Activated T-helper 1 cell treated with anti-CD3 and anti-CD28 coated beads, Interleukin-12 subunit alpha, Interleukin-12 subunit beta, Interleukin-2, Interleukin-4 antibody, amounts not matched to agents 30 ng/mL and 10 ng/mL and 1 ng/mL, durations not matched to agents 14 hours and 24 hours and 36 hours (primary cell): ENCODE measurements at regions of chr7 and their contacts with region 1.

Region 1: GRCh38 chr7:100545360-100546128 is 6.5 kb downstream of the AGFG2 start:
- DNase-seq: peak; percentile 25
- H3K4me3 Mint-ChIP-seq: peak overlapping the region; percentile 80
- H3K27ac Mint-ChIP-seq: peak overlapping the region; percentile 100
- H3K4me1 Mint-ChIP-seq: peaks cover 98% of the 10 kb centered on the region
- H3K27me3 Mint-ChIP-seq: no peaks in the 10 kb centered on the region

Region 2: DNA sequence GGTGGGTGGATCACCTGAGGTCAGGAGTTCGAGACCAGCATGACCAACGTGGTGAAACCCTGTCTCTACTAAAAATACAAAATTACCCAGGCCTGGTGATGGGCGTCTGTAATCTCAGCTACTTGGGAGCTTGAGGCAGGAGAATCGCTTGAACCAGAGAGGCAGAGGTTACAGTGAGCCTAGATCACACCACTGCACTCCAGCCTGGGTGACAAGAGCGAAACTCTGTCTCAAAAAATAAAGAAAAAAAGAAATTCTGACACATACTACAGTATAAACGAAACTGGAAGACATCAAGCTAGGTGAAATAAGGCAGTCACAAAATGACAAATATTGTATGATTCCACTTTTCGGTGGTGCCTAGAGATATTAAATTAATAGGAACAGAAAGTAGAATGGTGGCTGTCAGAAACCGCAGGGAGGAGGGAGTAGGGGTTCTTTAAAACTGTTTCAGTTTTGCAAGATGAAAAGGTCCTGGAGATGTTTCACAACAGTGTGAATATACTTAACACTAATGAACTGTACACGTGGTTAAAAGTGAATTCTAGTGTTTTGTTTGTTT is 149.0 kb before region 1 on chr7:
- intact Hi-C with region 1: loop called (anchors 1 kb)
- DNase-seq: peak; percentile 53
- H3K4me3 Mint-ChIP-seq: peak overlapping the region; percentile 51
- H3K27ac Mint-ChIP-seq: peak overlapping the region; percentile 84
- H3K4me1 Mint-ChIP-seq: peaks cover 22% of the 10 kb centered on the region
- H3K27me3 Mint-ChIP-seq: peaks cover 51% of the 10 kb centered on the region

Region 3: GRCh38 chr7:100478966-100479665 is 66.4 kb before region 1 on chr7 and contains the start of gene TSC22D4:
- intact Hi-C with region 1: loop called (anchors 1 kb)
- DNase-seq: peak; percentile 85
- H3K4me3 Mint-ChIP-seq: peak within 1 kb of the TSS; percentile 99
- H3K27ac Mint-ChIP-seq: peak within 1 kb of the TSS; percentile 93
- H3K4me1 Mint-ChIP-seq: peaks cover 35% of the 10 kb centered on the region
- H3K27me3 Mint-ChIP-seq: peaks cover 6% of the 10 kb centered on the region
- total RNA-seq, gene TSC22D4: 126 and 134 TPM in 2 replicates

Region 4: DNA sequence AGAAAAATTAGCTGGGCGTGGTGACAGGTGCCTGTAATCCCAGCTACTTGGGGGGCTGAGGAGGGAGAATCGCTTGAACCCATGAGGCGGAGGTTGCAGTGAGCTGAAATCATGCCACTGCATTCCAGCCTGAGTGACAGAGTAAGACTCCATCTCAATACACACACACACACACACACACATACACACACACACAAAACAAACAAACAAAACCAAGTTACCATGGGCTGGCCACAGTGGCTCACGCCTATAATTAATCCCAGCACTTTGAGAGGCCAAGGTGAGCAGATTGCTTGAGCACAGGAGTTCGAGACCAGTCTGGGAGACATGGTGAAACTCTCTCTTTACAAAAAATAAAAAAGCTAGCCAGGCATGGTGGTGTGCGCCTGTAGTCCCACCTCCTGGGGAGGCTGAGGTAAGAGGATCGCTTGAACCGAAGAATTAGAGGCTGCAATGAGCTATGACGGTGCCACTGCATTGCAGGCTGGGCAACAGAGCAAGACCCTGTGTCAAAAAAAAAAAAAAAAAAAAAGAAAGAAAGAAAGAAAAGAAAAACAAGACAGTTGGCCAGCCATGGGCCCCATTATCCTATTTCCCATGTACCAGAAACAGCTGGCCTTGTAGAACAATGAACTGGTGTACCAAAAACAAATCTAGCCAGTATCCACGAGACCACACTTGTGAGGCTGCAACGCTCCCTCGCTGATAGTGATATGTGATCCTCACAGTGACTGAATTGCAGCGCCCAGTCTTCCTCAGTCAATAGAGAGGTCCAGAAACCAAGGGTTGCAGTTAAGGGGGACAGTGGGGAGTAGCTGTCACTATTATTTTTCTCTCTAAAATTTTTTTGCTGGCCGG is 13.2 kb before region 1 on chr7:
- intact Hi-C with region 1: loop called (anchors 1 kb)
- DNase-seq: no peak
- H3K4me3 Mint-ChIP-seq: no peak overlapping the region
- H3K27ac Mint-ChIP-seq: no peak overlapping the region
- H3K4me1 Mint-ChIP-seq: peaks cover under 1% of the 10 kb centered on the region
- H3K27me3 Mint-ChIP-seq: peaks cover 2% of the 10 kb centered on the region

Region 5: GRCh38 chr7:100611974-100612729 is 66.6 kb after region 1 on chr7 and contains the start of gene MOSPD3:
- intact Hi-C with region 1: loop called (anchors 2 kb)
- DNase-seq: peak; percentile 97
- H3K4me3 Mint-ChIP-seq: peak within 1 kb of the TSS; percentile 98
- H3K27ac Mint-ChIP-seq: peak within 1 kb of the TSS; percentile 100
- H3K4me1 Mint-ChIP-seq: peaks cover 22% of the 10 kb centered on the region
- H3K27me3 Mint-ChIP-seq: peaks cover 8% of the 10 kb centered on the region
- total RNA-seq, gene MOSPD3: 10.3 and 11.5 TPM in 2 replicates